Mammary epithelial cell (primary cell): ENCODE measurements at regions of chr5 and their contacts with region 1.

Region 1: DNA sequence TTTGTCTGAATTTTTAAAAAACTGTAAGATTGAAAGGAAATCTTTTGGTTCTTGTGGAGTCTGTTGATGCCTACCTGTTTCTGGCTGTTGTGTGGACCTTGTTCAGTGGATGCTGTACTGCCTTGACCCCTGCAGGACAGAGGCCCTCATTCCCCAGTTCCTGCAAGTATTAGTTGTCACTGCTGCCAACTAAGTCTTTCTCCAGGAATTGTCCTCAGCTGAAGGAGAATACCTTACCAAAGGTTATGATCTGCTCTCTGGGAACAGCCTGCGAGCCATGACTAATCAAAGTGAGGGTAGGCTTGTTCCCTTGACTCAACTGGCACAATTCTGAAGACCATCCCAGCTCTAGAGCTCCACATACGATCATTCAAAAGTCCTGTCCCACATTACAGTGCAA is 145.3 kb upstream of the FST start:
- DNase-seq: peak; percentile 50
- H3K4me3 ChIP-seq: no peak overlapping the region
- H3K27ac ChIP-seq: peak overlapping the region; percentile 100
- H3K4me1 ChIP-seq: peaks cover 87% of the 10 kb centered on the region
- H3K27me3 ChIP-seq: no peaks in the 10 kb centered on the region
- CTCF ChIP-seq: peak; percentile 19 to 40

Region 2: DNA sequence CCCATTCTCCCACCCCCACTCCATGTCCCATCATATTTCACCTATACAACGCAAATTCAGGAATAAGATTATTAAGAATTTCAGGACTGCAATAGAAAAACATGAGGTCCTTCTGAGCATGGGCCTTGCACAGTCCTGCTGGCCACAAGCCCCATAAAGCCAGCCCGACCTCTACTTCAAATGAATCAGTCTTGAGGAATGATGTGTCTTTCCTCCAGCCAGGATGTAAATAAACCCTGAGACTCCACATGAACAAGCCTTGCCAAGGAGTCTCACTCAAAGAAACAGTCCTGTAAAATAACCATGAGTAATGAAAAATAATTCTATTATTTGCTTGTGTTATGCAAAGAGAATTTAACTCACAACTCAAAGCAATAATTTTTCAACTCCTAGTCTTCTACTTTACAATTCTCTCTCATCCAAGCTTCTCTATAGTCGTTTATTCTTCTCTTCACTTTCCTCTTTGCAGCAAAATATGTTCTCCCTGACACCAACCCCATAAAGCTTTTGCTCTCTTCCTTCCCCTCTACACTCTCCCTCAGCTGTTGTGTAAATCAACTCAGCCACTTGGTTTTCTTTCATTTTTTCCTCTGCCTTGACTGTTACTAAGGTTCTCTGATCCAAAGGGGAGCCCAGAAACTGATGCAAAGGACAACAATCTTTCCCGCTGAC is 85.5 kb before region 1 on chr5:
- CTCF ChIA-PET with region 1: no interaction called
- dilution Hi-C with region 1: no loop called
- in situ Hi-C with region 1: no loop called
- intact Hi-C with region 1: loop called (anchors 1 kb)
- DNase-seq: peak; percentile 87
- H3K4me3 ChIP-seq: no peak overlapping the region
- H3K27ac ChIP-seq: peak overlapping the region; percentile 98
- H3K4me1 ChIP-seq: peaks cover 77% of the 10 kb centered on the region
- H3K27me3 ChIP-seq: no peaks in the 10 kb centered on the region
- CTCF ChIP-seq: no peak

Region 3: DNA sequence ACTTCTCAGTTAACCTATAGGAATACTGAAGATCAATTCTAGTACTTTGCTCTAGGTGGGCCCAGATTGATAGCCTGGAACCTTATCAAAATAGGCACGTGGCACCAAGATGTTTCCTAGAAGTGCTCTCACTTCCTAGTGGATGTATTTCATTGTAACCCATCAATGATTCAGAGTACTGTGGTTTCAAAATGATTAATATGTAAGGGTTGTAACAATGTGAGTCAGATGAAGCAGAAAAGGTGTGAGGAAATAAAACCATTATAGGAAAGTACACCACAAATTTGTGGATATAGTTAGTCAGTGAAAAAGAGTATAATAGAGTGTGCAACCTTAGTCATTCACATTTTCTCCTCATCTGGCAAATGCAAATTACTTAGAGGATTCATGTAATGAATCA is 32.0 kb before region 1 on chr5:
- CTCF ChIA-PET with region 1: no interaction called
- dilution Hi-C with region 1: no loop called
- in situ Hi-C with region 1: no loop called
- intact Hi-C with region 1: loop called (anchors 1 kb)
- DNase-seq: peak; percentile 94
- H3K4me3 ChIP-seq: no peak overlapping the region
- H3K27ac ChIP-seq: peak overlapping the region; percentile 93
- H3K4me1 ChIP-seq: peaks cover 18% of the 10 kb centered on the region
- H3K27me3 ChIP-seq: no peaks in the 10 kb centered on the region
- CTCF ChIP-seq: no peak

Region 4: DNA sequence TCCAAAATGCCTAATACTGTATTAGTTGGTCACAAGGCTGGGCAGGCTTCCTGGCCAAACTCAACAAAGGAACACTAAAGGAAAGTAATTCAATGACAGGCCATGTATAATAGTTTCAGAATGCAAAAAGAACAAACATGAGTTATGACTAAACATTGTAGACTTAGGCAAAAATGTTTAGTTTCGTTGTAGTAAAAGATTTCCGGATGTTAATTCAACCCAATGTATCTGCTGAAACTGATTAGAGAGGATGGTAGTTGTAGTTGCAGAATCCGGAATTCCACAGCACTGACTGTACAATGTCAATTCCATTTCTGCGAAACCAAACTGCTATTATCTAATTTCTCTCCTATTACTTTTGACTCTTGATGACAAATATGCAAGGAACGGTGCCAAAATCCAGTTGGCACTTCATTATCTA is 27.4 kb after region 1 on chr5:
- CTCF ChIA-PET with region 1: no interaction called
- dilution Hi-C with region 1: loop called (anchors 5 kb)
- in situ Hi-C with region 1: no loop called
- intact Hi-C with region 1: loop called (anchors 1 kb)
- DNase-seq: peak; percentile 99
- H3K4me3 ChIP-seq: no peak overlapping the region
- H3K27ac ChIP-seq: peak overlapping the region; percentile 100
- H3K4me1 ChIP-seq: peaks cover 56% of the 10 kb centered on the region
- H3K27me3 ChIP-seq: no peaks in the 10 kb centered on the region
- CTCF ChIP-seq: no peak

Region 5: GRCh38 chr5:53425598-53426511 is 90.7 kb after region 1 on chr5:
- CTCF ChIA-PET with region 1: no interaction called
- dilution Hi-C with region 1: no loop called
- in situ Hi-C with region 1: no loop called
- intact Hi-C with region 1: loop called (anchors 1 kb)
- DNase-seq: no peak
- H3K4me3 ChIP-seq: no peak overlapping the region
- H3K27ac ChIP-seq: peak overlapping the region; percentile 100
- H3K4me1 ChIP-seq: peaks cover 44% of the 10 kb centered on the region
- H3K27me3 ChIP-seq: no peaks in the 10 kb centered on the region
- CTCF ChIP-seq: peak; percentile 12 to 24